HepG2 (cell line): ENCODE measurements at regions of chr1 and their contacts with region 1.

Region 1: DNA sequence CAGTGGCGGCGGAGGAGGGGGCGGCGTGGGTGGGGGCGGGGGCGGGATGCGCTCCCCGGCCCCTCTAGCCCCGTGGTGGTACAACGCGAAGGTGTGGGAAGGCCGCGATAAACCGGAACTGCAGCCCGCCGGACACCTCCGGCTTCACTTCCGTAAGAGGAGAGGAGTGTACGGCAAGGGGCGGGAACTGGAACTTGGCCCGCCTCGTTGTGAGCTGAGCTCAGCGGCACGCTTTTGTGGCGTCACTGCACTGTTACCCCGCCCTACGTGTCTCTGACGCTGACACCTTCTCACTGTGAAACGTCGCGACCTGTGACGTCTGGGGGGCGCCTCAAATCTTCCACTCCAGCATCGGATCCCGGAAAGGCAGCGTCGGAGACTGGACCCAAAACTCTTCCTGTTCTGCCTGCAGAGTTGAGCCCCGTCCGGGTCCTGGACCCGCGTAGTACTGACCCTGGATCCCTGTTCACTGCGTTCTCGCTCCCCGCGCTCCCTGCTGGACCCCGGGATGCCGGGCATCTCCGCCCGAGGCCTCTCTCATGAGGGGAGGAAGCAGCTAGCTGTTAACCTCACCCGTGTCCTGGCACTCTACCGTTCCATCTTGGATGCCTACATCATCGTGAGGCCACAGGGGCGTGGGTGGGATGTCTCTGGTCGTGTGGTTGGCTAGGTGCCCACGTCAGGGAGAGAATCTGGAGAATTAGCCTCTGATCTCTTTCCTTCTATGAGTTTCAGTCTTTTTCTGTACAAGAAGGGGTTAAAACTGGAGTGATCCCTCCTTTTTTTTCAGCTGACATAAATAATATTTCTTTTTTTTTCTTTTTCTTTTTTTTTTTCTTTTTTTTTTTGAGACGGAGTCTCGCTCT is at the start of gene ISG20L2:
- DNase-seq: peak; percentile 90
- ATAC-seq: peak; percentile 88
- H3K4me3 ChIP-seq: peak within 1 kb of the TSS; percentile 89 to 100 (median 98)
- H3K27ac ChIP-seq: peak within 1 kb of the TSS; percentile 79
- H3K4me1 ChIP-seq: peaks cover 49% of the 10 kb centered on the region
- H3K27me3 ChIP-seq: no peaks in the 10 kb centered on the region; a peak in 1 of 5 replicates
- CTCF ChIP-seq: 0 out of 2 replicates have a peak, but pooled peaks have one; percentile 21
- EP300 ChIP-seq: no peak
- POLR2A ChIP-seq: peak; percentile 57 to 86; a peak in 3 of 4 replicates
- RAD21 ChIP-seq: peak; percentile 14; the same call in 1 of the 2 replicates
- total RNA-seq, gene ISG20L2: 17.8 and 19.8 TPM in 2 replicates

Region 2: GRCh38 chr1:156528041-156528630 is 200.7 kb before region 1 on chr1:
- CTCF ChIA-PET with region 1: no interaction called
- POLR2A ChIA-PET with region 1: no interaction called
- in situ Hi-C with region 1: no loop called
- intact Hi-C with region 1: no loop called
- DNase-seq: no peak
- ATAC-seq: no peak
- H3K4me3 ChIP-seq: no peak overlapping the region
- H3K27ac ChIP-seq: no peak overlapping the region
- H3K4me1 ChIP-seq: peaks cover 10% of the 10 kb centered on the region
- H3K27me3 ChIP-seq: no peaks in the 10 kb centered on the region
- CTCF ChIP-seq: no peak
- EP300 ChIP-seq: no peak
- POLR2A ChIP-seq: no peak
- RAD21 ChIP-seq: no peak

Region 3: GRCh38 chr1:156551866-156552265 is 177.0 kb before region 1 on chr1:
- CTCF ChIA-PET with region 1: no interaction called
- POLR2A ChIA-PET with region 1: no interaction called
- in situ Hi-C with region 1: no loop called
- intact Hi-C with region 1: no loop called
- DNase-seq: no peak
- ATAC-seq: no peak
- H3K4me3 ChIP-seq: no peak overlapping the region
- H3K27ac ChIP-seq: no peak overlapping the region
- H3K4me1 ChIP-seq: peaks cover 15% of the 10 kb centered on the region
- H3K27me3 ChIP-seq: no peaks in the 10 kb centered on the region
- CTCF ChIP-seq: no peak
- EP300 ChIP-seq: no peak
- POLR2A ChIP-seq: no peak
- RAD21 ChIP-seq: no peak

Region 4: DNA sequence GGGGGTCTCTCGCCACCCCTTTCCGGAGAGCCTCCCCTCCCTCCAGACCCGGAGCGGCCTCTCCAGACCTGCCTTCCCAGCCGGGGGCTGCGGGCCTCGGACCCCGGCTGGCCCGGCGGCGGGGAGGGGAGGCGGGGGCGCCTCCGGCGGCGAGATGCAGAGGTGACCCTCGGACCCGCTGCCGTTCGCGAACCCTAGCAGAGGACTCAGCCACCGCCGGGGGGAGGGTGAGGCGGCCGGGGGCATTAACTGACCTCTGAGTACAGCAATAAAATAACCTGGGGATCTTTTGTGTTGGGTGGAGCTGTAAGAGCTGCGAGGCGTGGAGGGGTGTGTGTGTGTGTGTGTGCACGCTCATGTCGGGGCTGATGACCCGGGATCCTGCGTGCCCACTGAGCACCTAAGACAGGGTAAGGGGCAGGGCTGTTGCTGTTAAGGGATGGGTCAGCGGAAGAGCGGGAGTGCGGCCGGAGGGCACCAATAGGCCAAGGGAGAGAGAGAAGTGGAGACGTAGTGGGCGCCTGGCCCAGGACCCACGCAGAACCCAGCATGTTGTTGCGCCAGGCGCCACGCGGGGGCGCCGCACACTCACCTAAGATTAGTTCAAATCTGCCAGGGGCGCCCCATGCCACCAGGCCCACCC is 103.3 kb before region 1 on chr1:
- CTCF ChIA-PET with region 1: interaction called, 11 read pairs
- POLR2A ChIA-PET with region 1: interaction called, 3 read pairs
- in situ Hi-C with region 1: no loop called
- intact Hi-C with region 1: no loop called
- DNase-seq: no peak
- ATAC-seq: peak; percentile 48
- H3K4me3 ChIP-seq: peak overlapping the region; percentile 43 to 69 (median 44); a peak in 5 of 6 replicates
- H3K27ac ChIP-seq: no peak overlapping the region
- H3K4me1 ChIP-seq: peaks cover 34% of the 10 kb centered on the region
- H3K27me3 ChIP-seq: peaks cover 13 to 40% of the 10 kb centered on the region in 2 experiments
- CTCF ChIP-seq: peak; percentile 79
- EP300 ChIP-seq: no peak
- POLR2A ChIP-seq: no peak
- RAD21 ChIP-seq: peak; percentile 48; the same call in 1 of the 2 replicates

Region 5: DNA sequence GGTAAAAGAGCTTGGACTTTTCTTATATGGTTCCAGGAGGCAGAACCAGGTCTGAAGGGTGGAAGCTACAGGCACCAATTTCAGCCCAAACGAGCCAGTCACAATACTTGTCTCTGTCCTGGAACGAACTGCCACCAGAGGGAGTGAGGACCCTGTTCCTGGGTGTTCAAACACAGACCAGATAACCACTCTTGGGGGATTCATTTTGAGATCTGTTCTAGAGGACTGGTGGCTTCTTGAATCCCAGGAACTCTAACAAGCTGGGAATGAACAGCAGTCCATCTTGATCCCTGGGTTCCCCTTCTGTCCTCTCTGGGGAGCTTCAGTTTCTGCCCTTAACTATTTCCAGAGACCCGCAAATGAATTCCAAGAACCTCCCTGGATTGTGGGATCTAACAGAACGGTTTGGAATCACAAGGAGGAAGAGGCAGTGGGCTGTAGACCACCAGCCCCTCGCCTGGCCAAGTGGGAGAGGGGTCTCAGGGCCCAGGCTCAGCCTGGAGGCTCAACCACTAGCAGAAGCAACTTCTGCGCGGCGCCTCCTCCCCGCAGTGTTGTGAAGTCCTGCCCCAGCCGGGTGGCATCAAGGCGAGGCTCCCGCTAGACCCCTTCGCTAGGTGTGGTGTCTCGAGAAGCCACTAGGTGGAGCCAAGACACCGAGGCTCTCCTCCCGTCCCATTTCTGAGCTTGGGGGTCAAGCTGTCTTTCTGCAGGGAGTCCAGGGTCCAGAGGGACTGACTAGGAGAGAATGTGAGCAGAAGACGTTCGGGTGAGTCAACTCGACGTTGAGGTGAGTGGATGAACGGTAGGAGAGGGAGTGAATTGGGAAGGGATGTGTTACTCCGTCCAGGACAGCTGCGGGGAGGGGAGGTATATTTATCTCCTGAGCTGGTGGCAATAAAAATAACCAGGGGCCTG is 39.5 kb before region 1 on chr1:
- CTCF ChIA-PET with region 1: interaction called, 119 read pairs
- POLR2A ChIA-PET with region 1: interaction called, 22 read pairs
- in situ Hi-C with region 1: loop called (anchors 5 kb)
- intact Hi-C with region 1: loop called (anchors 1 kb)
- DNase-seq: peak; percentile 75
- ATAC-seq: peak; percentile 93
- H3K4me3 ChIP-seq: peak overlapping the region; percentile 41 to 65 (median 43); a peak in 5 of 6 replicates
- H3K27ac ChIP-seq: no peak overlapping the region
- H3K4me1 ChIP-seq: peaks cover 40% of the 10 kb centered on the region
- H3K27me3 ChIP-seq: peaks cover 18 to 49% of the 10 kb centered on the region in 2 experiments; a peak in 4 of 5 replicates
- CTCF ChIP-seq: peak; percentile 98
- EP300 ChIP-seq: no peak
- POLR2A ChIP-seq: no peak
- RAD21 ChIP-seq: peak; percentile 87

Region 6: DNA sequence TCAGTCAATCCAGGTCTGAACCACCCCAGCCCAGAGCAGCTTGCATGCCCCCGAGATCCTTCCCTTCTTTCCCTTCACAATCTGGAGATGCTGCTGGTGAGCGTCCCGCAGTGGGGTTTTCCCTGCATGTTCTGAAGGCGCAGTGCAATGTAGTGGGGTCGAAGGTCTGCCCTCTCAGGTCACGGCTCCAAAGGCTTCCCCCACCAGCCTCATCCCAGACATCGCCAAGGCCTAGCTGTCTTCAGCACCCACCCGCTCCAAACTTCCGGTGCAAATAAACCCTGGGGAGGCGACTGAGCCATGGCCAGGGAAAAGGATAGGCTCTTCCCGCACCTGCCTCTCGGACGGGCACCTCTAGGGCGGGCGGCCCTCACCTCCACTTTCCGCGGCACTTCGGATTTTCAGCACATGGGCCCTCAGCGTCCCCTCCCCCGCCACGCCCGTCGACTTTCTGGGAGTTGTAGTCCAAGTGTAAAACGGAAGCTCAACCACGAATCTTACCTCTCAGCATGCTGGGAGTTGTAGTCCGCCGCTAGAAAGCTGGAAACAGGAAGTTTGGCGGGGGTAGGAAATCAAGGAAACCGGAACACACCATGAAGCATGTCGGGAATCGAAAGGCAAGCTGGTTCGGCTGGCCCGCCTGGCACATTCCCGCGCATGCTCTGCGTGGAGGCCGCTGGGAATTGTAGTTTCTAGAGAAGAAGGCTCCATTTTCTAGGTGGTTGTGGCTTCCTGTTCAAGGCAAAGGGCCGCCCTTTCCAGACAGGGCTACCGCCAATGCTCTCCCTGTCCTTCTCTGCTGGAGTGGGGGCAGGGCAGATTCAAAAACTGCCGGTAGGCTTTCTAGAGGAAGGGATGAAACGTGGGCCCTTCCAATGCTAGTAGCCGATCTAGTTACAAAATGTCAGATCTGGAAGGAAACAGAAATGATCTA is 12.1 kb after region 1 on chr1 and contains the start of gene MRPL24:
- CTCF ChIA-PET with region 1: no interaction called
- POLR2A ChIA-PET with region 1: interaction called, 99 read pairs
- in situ Hi-C with region 1: no loop called
- intact Hi-C with region 1: no loop called
- DNase-seq: peak; percentile 99
- ATAC-seq: peak; percentile 91
- H3K4me3 ChIP-seq: peak within 1 kb of the TSS; percentile 78 to 93 (median 81)
- H3K27ac ChIP-seq: peak within 1 kb of the TSS; percentile 83
- H3K4me1 ChIP-seq: peaks cover 23% of the 10 kb centered on the region
- H3K27me3 ChIP-seq: no peaks in the 10 kb centered on the region; a peak in 1 of 5 replicates
- CTCF ChIP-seq: peak; percentile 33; the same call in 1 of the 2 replicates
- EP300 ChIP-seq: peak in 1 of 2 experiments; percentile 70; a peak in 3 of 4 replicates
- POLR2A ChIP-seq: peak; percentile 66 to 85
- RAD21 ChIP-seq: 0 out of 2 replicates have a peak, but pooled peaks have one; percentile 35
- total RNA-seq, gene MRPL24: 42.9 and 45.7 TPM in 2 replicates

Region 7: GRCh38 chr1:156751758-156752757 is 23.2 kb after region 1 on chr1:
- CTCF ChIA-PET with region 1: no interaction called
- POLR2A ChIA-PET with region 1: interaction called, 55 read pairs
- in situ Hi-C with region 1: no loop called
- intact Hi-C with region 1: loop called (anchors 2 kb)
- DNase-seq: peak; percentile 90
- ATAC-seq: peak; percentile 73
- H3K4me3 ChIP-seq: peak overlapping the region; percentile 83 to 90 (median 87)
- H3K27ac ChIP-seq: peak overlapping the region; percentile 100
- H3K4me1 ChIP-seq: peaks cover 37% of the 10 kb centered on the region
- H3K27me3 ChIP-seq: no peaks in the 10 kb centered on the region; a peak in 1 of 5 replicates
- CTCF ChIP-seq: peak; percentile 25; the same call in 1 of the 2 replicates
- EP300 ChIP-seq: peak in 1 of 2 experiments; percentile 28; a peak in 2 of 4 replicates
- POLR2A ChIP-seq: peak in 1 of 2 experiments; percentile 67; a peak in 2 of 4 replicates
- RAD21 ChIP-seq: peak; percentile 34; the same call in 1 of the 2 replicates

Region 8: GRCh38 chr1:156797212-156797871 is 68.5 kb after region 1 on chr1:
- CTCF ChIA-PET with region 1: interaction called, 6 read pairs
- POLR2A ChIA-PET with region 1: interaction called, 7 read pairs
- in situ Hi-C with region 1: no loop called
- intact Hi-C with region 1: loop called (anchors 1 kb)
- DNase-seq: peak; percentile 55
- ATAC-seq: peak; percentile 53; the same call in 2 of the 3 replicates
- H3K4me3 ChIP-seq: no peak overlapping the region
- H3K27ac ChIP-seq: no peak overlapping the region
- H3K4me1 ChIP-seq: peaks cover 39% of the 10 kb centered on the region
- H3K27me3 ChIP-seq: no peaks in the 10 kb centered on the region
- CTCF ChIP-seq: peak; percentile 68
- EP300 ChIP-seq: no peak
- POLR2A ChIP-seq: no peak
- RAD21 ChIP-seq: 0 out of 2 replicates have a peak, but pooled peaks have one; percentile 25